Aorta (tissue), 5 donors: ENCODE measurements at regions of chr4 and their contacts with region 1.

Region 1: DNA sequence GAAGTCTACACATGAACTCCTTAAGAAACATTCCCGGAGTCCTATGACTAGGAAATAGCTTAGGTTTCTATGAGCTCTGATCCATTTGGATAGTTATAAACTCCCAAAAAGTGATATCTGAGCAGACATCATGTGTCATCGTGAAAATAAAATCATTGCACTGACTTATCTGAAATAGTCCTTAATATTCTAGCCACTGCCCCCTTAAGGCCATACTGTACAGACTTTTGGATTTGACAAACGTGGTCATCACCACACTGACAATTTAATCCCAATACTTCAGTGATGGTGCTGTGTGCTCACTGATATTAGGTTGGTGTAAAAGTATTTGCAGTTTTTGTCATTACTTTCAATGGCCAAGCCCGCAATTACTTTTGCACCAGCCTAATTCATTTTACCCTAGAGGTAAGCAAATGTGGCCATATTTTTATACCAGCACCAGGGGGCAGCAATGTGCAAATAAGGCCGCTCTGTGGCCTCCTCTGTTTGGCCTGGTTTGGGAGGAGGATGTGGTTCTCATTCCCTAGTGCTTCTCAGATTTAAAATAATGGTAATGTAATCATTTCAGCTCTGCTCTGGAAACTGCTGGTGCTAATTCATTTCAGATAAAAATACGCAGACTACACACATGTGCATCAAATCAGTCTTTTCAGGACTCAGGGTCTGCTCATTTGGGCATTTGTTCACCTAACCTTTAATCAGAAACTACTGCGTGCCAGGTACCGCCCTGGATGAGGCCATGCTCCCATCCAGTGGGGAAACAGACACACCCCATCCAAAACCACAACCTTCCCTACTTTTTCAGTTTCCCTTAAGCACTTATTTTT is 196.4 kb upstream of the C1QTNF7 start:
- DNase-seq: peak; percentile 87
- ATAC-seq: peak; percentile 88
- H3K4me3 ChIP-seq: no peak overlapping the region
- H3K27ac ChIP-seq: peak overlapping the region in 1 of 2 donors; percentile 58
- H3K4me1 ChIP-seq: peaks cover 5 to 8% of the 10 kb centered on the region in 2 donors
- H3K27me3 ChIP-seq: no peaks in the 10 kb centered on the region

Region 2: DNA sequence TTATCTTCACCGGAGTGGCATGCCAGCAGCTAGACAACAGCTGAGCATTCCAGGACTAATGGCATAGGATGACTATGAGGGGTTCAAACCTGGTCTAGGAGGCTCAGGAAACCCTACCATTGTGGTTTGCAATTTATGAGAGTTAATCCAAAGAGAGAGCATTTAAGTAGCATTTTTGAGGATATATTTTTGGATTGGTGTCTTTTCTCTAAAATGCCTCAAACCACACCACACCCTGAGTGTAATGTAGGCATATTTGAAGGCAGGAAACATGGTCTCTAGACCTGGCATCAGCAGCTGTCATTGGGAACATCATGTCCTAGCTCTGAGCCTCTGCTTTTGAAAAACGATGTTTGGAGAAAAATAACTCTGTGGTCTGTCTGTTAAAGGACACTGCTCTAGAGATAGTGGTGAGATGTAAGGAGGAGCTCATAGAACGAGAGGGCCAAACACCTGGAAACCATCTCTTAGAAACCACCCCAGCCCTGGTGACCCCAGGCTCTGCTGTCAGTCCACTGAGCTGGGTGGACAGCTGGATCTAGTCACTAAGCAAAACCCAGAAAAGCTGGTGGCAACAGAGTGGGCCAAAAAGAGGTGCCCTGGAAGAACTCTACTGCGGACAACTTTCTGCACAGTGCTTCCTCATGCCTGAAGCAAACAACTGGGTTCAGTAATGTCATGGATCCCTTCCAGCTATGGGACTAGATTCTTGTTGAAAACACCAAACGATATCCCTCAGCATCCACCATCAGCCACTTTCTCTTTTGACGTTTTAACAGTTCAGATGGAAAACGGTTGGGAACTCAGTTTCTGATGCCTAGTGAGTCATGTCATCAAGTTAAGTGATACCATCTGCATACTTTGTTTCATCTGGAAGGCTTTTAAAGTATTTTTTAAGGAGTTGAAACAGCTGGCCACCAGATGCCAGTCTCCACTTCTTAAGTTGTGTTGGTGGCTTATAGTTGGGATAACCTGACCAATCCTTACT is 96.1 kb after region 1 on chr4:
- intact Hi-C with region 1: loop called in 1 of 2 experiments (anchors 10 kb)
- DNase-seq: no peak
- ATAC-seq: no peak
- H3K4me3 ChIP-seq: no peak overlapping the region
- H3K27ac ChIP-seq: peak overlapping the region in 1 of 2 donors; percentile 1
- H3K4me1 ChIP-seq: peaks cover 0 to 8% of the 10 kb centered on the region in 2 donors
- H3K27me3 ChIP-seq: no peaks in the 10 kb centered on the region

Region 3: DNA sequence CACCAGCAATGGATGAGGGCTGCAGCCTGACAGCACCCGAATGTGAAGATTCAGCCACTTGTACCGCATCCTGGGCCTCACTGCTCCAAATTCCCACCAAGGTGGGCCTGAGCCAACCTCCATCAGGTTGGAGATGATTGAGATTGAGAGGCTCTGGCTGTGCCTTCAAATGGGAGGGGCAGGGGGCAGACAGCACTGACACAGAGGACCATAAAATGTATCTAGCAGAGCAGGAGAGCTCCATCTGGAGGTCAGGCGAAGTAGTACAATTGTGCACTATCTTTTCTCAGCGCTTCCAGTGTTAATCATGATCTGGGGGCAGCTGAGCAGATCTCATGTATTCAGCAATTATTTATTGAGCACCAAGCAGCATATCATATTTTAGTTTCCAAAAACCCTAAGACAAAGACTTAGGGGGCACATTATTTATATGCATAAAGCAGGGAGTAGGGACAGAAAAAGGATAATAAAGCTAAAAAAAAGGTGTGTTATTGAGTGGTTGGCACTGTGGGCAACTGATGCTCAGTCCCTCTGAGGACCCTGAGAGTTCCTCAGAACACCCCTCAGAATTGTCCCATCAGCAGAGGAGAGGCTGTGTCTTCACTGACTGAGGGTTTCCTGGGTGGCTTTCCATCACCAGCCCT is 164.8 kb after region 1 on chr4:
- intact Hi-C with region 1: loop called in 1 of 2 experiments (anchors 10 kb)
- DNase-seq: no peak
- ATAC-seq: no peak
- H3K4me3 ChIP-seq: no peak overlapping the region
- H3K27ac ChIP-seq: no peak overlapping the region
- H3K4me1 ChIP-seq: peaks cover 14 to 28% of the 10 kb centered on the region in 2 donors
- H3K27me3 ChIP-seq: no peaks in the 10 kb centered on the region

Region 4: GRCh38 chr4:15420642-15421041 is 189.2 kb after region 1 on chr4:
- intact Hi-C with region 1: loop called (anchors 10 kb)
- DNase-seq: no peak
- ATAC-seq: peak; percentile 73
- H3K4me3 ChIP-seq: no peak overlapping the region
- H3K27ac ChIP-seq: peak overlapping the region; percentile 49 to 67
- H3K4me1 ChIP-seq: peaks cover 9 to 22% of the 10 kb centered on the region in 2 donors
- H3K27me3 ChIP-seq: no peaks in the 10 kb centered on the region

Region 5: DNA sequence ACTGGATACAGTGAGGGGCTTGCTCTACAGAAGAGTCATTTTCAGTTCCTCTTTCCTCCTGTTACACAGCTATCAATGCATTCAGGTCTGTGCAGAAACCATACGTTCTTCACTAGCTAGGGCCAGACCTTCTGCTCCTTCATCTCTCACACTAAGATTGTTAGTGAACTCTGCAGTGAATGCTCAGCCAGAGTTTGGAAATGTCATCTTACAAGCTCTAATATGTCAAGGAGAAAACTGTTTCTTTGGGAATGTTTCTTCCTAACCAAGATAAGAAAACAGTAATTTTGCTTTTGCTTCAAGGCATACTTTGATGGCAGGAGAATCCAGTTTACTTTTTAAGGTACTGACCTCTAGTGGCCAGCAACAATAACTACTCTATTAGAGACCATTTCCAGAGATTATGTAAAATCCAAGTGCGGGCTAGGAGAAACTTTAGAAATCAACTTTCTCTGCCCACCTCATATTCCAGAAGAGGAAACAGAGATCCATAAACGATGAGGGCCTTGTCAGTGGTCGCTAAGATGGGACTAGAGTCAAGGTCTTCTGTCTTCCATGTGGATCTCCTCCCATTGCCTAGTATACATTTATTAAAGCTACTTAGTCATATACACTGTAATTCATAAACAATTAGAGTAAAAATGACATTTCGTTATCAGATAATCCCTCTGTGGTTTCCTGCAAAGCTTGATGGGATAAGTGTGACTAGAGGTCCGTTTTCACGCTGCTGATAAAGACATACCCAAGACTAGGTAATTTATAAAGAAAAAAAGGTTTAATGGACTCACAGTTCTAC is 226.1 kb after region 1 on chr4:
- intact Hi-C with region 1: loop called (anchors 2 kb)
- DNase-seq: no peak
- ATAC-seq: peak; percentile 77
- H3K4me3 ChIP-seq: no peak overlapping the region
- H3K27ac ChIP-seq: peak overlapping the region; percentile 57 to 71
- H3K4me1 ChIP-seq: peaks cover 6 to 28% of the 10 kb centered on the region in 2 donors
- H3K27me3 ChIP-seq: no peaks in the 10 kb centered on the region

Region 6: GRCh38 chr4:15714646-15715435 is 483.4 kb after region 1 on chr4:
- intact Hi-C with region 1: no loop called
- DNase-seq: no peak
- ATAC-seq: peak; percentile 11
- H3K4me3 ChIP-seq: no peak overlapping the region
- H3K27ac ChIP-seq: no peak overlapping the region
- H3K4me1 ChIP-seq: peaks cover 2 to 4% of the 10 kb centered on the region in 2 donors
- H3K27me3 ChIP-seq: no peaks in the 10 kb centered on the region